ENCODE measurements at regions of chr19 and their contacts with region 1.

Region 1: DNA sequence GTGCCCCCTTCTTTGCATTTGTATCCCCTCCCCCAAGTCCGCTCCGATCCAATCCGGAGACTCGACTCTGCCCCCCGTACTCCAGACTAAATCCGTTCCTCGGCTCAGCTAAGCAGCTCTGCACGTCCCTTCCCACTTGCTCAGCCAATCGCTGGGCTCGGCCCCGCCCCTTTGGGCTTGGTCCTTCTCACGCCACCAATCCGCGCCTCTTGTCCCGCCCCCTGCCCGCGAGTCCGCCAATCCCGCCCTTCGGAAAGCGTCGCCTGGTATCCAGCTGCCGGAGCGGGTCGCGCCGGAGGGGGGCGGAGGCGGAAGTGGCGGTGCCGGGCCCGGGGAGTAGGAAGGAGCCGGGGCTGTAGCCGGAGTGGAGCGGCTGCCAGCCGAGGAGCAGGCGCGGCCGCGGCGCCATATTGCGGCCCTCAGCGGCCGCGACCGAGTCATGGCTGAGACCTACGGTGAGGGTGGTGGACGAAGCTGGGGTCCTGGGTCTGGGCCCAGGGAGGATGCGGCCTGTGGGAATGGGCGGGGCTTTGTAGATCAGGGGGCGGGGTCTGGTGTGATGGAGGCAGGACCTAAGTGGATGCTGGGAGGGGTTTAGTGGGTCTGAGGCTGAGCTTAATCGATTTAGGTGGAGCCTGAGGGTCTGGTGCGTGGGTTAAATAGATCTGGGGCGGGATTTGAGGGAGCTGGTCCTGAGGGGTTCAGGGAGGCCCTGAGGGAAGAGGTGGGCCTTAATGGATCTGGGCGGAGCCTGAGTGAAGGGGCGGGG is at the start of gene RAB4B:
- DNase-seq: peak; percentile 100
- ATAC-seq: peak; percentile 79
- H3K4me3 Mint-ChIP-seq: peak within 1 kb of the TSS; percentile 84
- H3K27ac Mint-ChIP-seq: peak within 1 kb of the TSS; percentile 94
- H3K4me1 Mint-ChIP-seq: peaks cover 38% of the 10 kb centered on the region
- H3K27me3 Mint-ChIP-seq: no peaks in the 10 kb centered on the region
- total RNA-seq, gene RAB4B: 26.4 to 33.7 TPM

Region 2: GRCh38 chr19:40798223-40798996 is 20.3 kb after region 1 on chr19:
- CTCF ChIA-PET with region 1: interaction called, 47 read pairs
- POLR2A ChIA-PET with region 1: interaction called, 25 read pairs
- intact Hi-C with region 1: loop called (anchors 1 kb)
- DNase-seq: peak; percentile 100
- ATAC-seq: peak; percentile 82
- H3K4me3 Mint-ChIP-seq: peak overlapping the region; percentile 91
- H3K27ac Mint-ChIP-seq: peak overlapping the region; percentile 97
- H3K4me1 Mint-ChIP-seq: peaks cover 49% of the 10 kb centered on the region
- H3K27me3 Mint-ChIP-seq: no peaks in the 10 kb centered on the region

Region 3: GRCh38 chr19:40806488-40807468 is 28.7 kb after region 1 on chr19:
- CTCF ChIA-PET with region 1: interaction called, 17 read pairs
- POLR2A ChIA-PET with region 1: interaction called, 6 read pairs
- intact Hi-C with region 1: loop called in 1 of 2 experiments (anchors 2 kb)
- DNase-seq: peak; percentile 90
- ATAC-seq: peak; percentile 51
- H3K4me3 Mint-ChIP-seq: peak overlapping the region; percentile 55
- H3K27ac Mint-ChIP-seq: peak overlapping the region; percentile 89
- H3K4me1 Mint-ChIP-seq: peaks cover 72% of the 10 kb centered on the region
- H3K27me3 Mint-ChIP-seq: no peaks in the 10 kb centered on the region

Region 4: DNA sequence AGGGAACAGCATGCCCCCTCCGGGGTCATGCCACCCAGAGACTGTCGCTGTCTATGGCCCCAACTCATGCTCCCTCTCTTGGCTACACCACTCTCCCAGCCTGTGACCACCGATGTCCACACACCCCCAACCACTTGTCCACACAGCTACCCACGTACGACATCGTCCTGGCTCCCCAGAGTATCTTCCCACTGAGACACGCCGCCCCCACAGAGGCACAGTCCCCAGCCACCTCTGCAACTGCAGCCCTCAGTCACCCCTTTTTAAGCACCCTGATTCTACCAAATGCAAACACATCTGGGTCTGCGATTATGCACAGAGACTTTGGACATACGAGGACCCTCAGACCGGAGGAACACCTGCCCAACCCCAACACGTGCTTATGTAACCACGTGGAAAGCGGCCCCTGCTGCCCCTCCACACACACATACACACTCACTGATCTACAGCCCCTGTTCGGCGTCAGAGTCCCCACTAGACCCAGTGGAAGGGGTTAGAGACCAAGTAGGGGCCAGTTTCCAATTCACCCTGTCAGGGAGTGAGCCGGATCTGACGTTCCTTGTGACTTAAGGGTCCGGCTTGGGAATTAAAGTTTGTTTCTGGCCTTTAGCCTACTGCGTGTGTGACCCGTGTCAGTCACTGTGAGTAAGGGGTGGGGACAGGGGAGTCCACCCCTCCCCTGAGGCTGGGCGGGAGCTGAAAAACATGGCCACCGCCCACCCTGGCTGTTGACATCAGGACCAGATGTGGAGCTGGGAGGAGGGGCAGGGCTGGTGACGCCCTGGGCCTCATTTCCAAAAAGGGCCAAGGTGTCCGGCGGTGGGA is 429.0 kb after region 1 on chr19:
- CTCF ChIA-PET with region 1: no interaction called
- POLR2A ChIA-PET with region 1: no interaction called
- intact Hi-C with region 1: no loop called
- DNase-seq: no peak
- ATAC-seq: no peak
- H3K4me3 Mint-ChIP-seq: no peak overlapping the region
- H3K27ac Mint-ChIP-seq: no peak overlapping the region
- H3K4me1 Mint-ChIP-seq: peaks cover 2% of the 10 kb centered on the region
- H3K27me3 Mint-ChIP-seq: no peaks in the 10 kb centered on the region

Measured in activated CD4-positive, alpha-beta T cell treated with anti-CD3 and anti-CD28 coated beads for 36 hours (primary cell).